PC-9 (cell line): ENCODE measurements at regions of chr7 and their contacts with region 1.

Region 1: DNA sequence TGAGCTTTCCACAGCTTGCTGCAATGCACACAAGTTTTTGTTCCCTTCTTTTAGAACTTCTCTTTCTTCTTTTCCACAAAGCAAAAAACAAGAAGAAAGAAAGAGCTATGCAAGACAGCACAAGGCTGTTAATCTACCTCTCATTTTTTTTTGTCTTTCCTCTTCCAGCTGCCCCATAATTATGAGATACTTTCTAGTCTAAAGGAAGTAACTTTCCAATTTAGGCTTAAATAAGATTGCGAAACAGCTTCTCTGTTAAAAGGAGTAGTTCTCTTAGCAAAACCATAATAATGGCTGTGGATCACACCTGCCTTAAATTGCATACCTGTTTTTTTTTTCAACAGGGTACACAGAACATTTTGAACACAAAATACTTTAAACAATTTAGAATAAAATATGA is 56.0 kb downstream of the NDUFB2 start:
- DNase-seq: no peak
- H3K4me3 ChIP-seq: no peak overlapping the region
- H3K27ac ChIP-seq: no peak overlapping the region
- H3K4me1 ChIP-seq: no peaks in the 10 kb centered on the region
- H3K27me3 ChIP-seq: no peaks in the 10 kb centered on the region
- CTCF ChIP-seq: no peak

Region 2: GRCh38 chr7:140533394-140533872 is 219.1 kb before region 1 on chr7:
- CTCF ChIA-PET with region 1: interaction called, 23 read pairs
- POLR2A ChIA-PET with region 1: no interaction called
- intact Hi-C with region 1: no loop called
- DNase-seq: no peak
- H3K4me3 ChIP-seq: no peak overlapping the region
- H3K27ac ChIP-seq: no peak overlapping the region
- H3K4me1 ChIP-seq: no peaks in the 10 kb centered on the region
- H3K27me3 ChIP-seq: no peaks in the 10 kb centered on the region
- CTCF ChIP-seq: no peak

Region 3: DNA sequence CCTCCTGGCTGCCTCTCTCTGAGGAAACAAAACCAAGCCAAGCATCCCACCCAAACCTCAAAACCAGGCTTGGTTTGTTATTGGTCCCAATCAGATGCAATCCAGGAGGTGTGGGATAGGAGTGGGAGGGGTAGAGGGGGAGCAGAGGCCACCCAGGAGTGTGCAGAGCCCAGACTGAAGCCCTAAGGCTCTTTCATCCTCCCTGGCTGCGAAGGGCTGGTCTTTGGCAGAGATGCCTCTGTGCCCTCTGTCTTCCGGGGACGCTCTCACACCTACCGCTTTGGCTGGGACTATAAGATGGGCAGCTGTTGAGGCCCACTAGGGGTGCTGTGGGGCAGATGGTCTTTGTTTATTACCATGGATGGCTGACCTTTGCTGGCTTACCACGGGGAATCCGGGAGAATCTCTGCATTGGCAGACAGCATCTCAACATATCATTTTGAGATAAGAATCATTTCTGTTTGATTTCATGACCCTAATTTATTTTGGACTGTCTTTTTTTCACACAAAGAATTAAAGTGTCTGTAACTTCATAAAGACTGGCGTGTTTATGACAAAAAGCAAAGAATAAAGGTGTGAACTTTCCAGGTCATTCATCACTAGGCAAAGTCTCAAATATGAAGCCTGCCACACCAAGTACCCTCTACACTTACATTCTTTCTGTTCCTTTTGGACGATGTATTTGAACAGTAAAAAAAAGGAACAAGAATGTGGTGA is 105.4 kb before region 1 on chr7:
- CTCF ChIA-PET with region 1: no interaction called
- POLR2A ChIA-PET with region 1: no interaction called
- intact Hi-C with region 1: no loop called
- DNase-seq: no peak
- H3K4me3 ChIP-seq: no peak overlapping the region
- H3K27ac ChIP-seq: no peak overlapping the region
- H3K4me1 ChIP-seq: peaks cover 32% of the 10 kb centered on the region
- H3K27me3 ChIP-seq: no peaks in the 10 kb centered on the region
- CTCF ChIP-seq: peak; percentile 55